HEK293T (cell line): ENCODE measurements at regions of chr2 and their contacts with region 1.

Region 1: GRCh38 chr2:47336259-47337238 is 66.4 kb upstream of the MSH2 start:
- DNase-seq: no peak

Region 2: DNA sequence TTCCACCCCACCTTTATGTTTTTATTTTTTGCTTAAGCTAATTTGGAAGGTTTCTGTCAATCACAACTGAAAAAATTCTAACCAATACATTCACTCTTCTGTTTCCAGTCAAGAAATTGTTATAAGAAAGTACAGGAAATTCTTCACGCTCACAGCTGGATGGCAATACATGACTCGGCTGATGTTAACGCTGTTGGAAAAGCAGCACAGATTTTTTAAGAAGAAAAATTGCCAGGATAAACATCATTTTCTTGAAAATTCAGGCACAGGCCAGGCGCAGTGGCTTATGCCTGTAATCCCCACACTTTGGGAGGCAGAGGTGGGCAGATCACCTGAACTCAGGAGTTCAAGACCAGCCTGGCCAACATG is 227.6 kb before region 1 on chr2:
- CTCF ChIA-PET with region 1: no interaction called
- POLR2A ChIA-PET with region 1: no interaction called
- DNase-seq: no peak

Region 3: DNA sequence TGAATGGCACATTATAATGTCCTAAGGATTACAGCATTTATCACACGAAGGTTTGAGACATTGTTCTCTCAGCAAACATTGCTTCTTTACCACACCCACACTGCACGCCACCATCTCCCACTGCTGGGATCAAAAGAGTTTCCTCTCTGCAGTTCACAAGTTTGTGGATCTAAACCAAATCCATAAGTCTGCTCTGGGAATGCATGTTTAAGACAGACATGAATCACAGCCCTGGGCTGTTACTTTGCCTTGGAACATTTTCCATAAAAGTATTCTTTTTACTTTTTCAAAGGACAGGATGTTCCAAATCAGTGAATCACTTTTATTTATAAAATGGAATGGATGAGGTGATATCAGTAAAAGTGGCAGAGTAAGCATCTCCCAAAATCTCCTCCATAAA is 217.5 kb before region 1 on chr2:
- CTCF ChIA-PET with region 1: no interaction called
- POLR2A ChIA-PET with region 1: no interaction called
- DNase-seq: no peak

Region 4: GRCh38 chr2:47323009-47323821 is 13.3 kb before region 1 on chr2:
- CTCF ChIA-PET with region 1: interaction called, 11 read pairs
- POLR2A ChIA-PET with region 1: no interaction called
- DNase-seq: peak; percentile 87

Region 5: GRCh38 chr2:47373747-47374146 is 37.2 kb after region 1 on chr2:
- CTCF ChIA-PET with region 1: interaction called, 17 read pairs
- POLR2A ChIA-PET with region 1: no interaction called
- DNase-seq: peak; percentile 42

Region 6: DNA sequence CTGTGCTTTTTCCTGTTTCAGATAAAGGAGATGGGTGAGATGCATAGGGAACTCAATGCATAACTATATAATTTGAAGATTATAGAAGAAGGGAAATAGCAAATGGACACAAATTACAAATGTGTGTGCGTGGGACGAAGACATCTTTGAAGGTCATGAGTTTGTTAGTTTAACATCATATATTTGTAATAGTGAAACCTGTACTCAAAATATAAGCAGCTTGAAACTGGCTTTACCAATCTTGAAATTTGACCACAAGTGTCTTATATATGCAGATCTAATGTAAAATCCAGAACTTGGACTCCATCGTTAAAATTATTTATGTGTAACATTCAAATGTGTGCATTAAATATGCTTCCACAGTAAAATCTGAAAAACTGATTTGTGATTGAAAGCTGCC is 50.0 kb after region 1 on chr2:
- CTCF ChIA-PET with region 1: interaction called, 71 read pairs
- POLR2A ChIA-PET with region 1: interaction called, 8 read pairs
- DNase-seq: no peak

Region 7: DNA sequence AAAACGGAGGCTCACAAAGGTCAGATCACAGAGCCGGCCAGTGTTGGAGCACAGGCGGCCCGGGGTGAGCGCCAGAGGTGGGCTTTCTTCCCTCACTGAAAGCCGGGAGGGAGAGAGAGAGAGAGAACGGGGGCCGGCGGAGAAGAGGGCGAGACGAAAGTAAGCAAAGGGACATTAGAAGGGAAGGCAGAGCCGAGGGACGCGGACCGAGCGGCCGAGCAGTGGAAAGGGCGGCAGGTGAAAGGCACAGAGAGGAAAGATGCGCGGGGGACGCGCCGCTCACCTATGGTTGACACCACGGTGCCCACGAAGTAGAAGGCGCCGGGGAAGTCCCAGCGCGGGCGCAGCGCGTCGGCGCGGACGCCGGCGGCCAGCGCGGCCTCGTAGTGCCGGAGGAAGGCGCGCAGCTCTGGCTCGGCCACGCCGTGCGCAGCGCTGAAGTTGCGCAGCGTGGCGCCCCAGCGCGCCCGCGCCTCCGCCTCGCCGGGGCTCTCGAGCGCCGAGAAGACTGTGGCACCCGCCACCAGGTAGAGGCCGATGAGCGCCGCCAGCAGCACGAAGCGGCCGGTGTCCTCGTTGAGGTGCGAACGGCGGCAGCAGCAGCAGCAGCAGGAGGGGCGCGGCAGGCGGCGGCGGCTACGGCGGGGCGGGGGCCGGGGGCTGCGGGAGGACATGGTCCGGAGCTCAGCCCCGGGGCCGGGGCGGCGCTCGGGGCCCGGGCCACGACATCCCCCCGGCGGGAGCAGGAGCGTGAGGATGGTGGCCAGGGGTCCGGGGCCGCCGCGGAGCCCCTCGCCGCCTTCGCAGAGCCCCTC is 233.3 kb after region 1 on chr2:
- CTCF ChIA-PET with region 1: no interaction called
- POLR2A ChIA-PET with region 1: no interaction called
- DNase-seq: peak; percentile 65